GM12878 (cell line): ENCODE measurements at regions of chr6 and their contacts with region 1.

Region 1: DNA sequence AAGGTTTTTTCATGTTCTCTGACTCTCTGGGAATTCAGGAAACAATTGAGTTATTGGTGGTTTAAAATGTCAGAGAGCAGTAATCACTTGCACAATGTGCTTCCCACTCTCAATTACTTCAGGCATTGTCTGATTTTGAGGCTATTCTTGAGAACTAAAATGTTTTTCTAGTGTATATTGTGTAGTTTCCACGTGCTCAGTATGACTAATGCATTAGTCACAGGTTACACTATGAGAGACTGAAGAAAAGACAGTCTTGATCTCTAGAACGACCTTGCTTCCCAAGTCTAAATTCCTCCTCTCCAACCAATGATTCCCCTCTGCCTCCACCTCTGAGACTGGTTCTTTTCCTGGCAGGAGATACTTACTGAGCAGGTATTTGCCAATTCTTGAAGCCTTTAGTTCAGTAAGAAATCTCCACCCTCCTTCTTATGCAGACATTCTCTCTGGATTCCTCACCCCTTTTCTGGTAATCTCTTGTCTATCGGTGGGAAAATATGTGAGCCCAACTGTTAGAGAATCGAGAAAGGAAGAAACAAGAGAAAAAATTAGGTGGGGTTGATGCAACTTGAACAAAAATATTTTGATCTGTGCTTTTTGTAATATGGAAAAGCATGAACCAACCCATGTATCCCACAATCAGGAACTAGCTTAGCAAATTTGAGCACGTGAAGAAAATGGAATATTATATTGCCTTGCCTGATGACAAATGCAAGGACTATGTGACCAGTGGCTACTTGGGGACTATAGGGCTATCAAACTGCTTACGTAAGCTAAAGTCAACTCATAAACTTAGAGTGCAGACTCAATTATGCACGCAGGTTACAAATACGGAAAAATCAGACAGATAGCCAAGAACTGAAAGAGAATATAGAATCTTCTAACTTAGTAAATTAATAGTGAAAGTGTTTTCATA is 61.1 kb upstream of the SLC22A16 start:
- DNase-seq: no peak
- ATAC-seq: peak; percentile 64
- H3K4me3 ChIP-seq: no peak overlapping the region
- H3K27ac ChIP-seq: no peak overlapping the region
- H3K4me1 ChIP-seq: no peaks in the 10 kb centered on the region
- H3K27me3 ChIP-seq: no peaks in the 10 kb centered on the region
- CTCF ChIP-seq: no peak
- EP300 ChIP-seq: no peak
- POLR2A ChIP-seq: no peak
- RAD21 ChIP-seq: no peak

Region 2: GRCh38 chr6:108651340-108652227 is 1885.9 kb before region 1 on chr6:
- CTCF ChIA-PET with region 1: no interaction called
- POLR2A ChIA-PET with region 1: no interaction called
- RAD21 ChIA-PET with region 1: no interaction called
- SMC1A ChIA-PET with region 1: no interaction called
- in situ Hi-C with region 1: no loop called
- intact Hi-C with region 1: no loop called
- DNase-seq: no peak
- ATAC-seq: no peak
- H3K4me3 ChIP-seq: no peak overlapping the region
- H3K27ac ChIP-seq: no peak overlapping the region
- H3K4me1 ChIP-seq: no peaks in the 10 kb centered on the region
- H3K27me3 ChIP-seq: no peaks in the 10 kb centered on the region
- CTCF ChIP-seq: no peak
- EP300 ChIP-seq: no peak
- POLR2A ChIP-seq: no peak
- RAD21 ChIP-seq: no peak

Region 3: GRCh38 chr6:110589865-110590513 is 52.5 kb after region 1 on chr6:
- CTCF ChIA-PET with region 1: no interaction called
- POLR2A ChIA-PET with region 1: no interaction called
- RAD21 ChIA-PET with region 1: no interaction called
- SMC1A ChIA-PET with region 1: interaction called, 8 read pairs
- in situ Hi-C with region 1: no loop called
- intact Hi-C with region 1: loop called (anchors 2 kb)
- DNase-seq: peak; percentile 56
- ATAC-seq: peak; percentile 92
- H3K4me3 ChIP-seq: no peak overlapping the region
- H3K27ac ChIP-seq: peak overlapping the region; percentile 29
- H3K4me1 ChIP-seq: peaks cover 20% of the 10 kb centered on the region
- H3K27me3 ChIP-seq: no peaks in the 10 kb centered on the region
- CTCF ChIP-seq: no peak
- EP300 ChIP-seq: no peak; a peak in 2 of 4 replicates
- POLR2A ChIP-seq: no peak
- RAD21 ChIP-seq: no peak